Mammary epithelial cell (primary cell): ENCODE measurements at regions of chr11 and their contacts with region 1.

Region 1: GRCh38 chr11:6505577-6506240 is 8.6 kb downstream of the DNHD1 start:
- DNase-seq: peak; percentile 65
- H3K4me3 ChIP-seq: no peak overlapping the region
- H3K27ac ChIP-seq: no peak overlapping the region
- H3K4me1 ChIP-seq: peaks cover 9% of the 10 kb centered on the region
- H3K27me3 ChIP-seq: no peaks in the 10 kb centered on the region
- CTCF ChIP-seq: peak; percentile 74 to 79

Region 2: GRCh38 chr11:5258543-5259262 is 1247.0 kb before region 1 on chr11:
- CTCF ChIA-PET with region 1: no interaction called
- dilution Hi-C with region 1: no loop called
- in situ Hi-C with region 1: no loop called
- intact Hi-C with region 1: no loop called
- DNase-seq: peak; percentile 43
- H3K4me3 ChIP-seq: no peak overlapping the region
- H3K27ac ChIP-seq: no peak overlapping the region
- H3K4me1 ChIP-seq: no peaks in the 10 kb centered on the region
- H3K27me3 ChIP-seq: no peaks in the 10 kb centered on the region
- CTCF ChIP-seq: no peak

Region 3: DNA sequence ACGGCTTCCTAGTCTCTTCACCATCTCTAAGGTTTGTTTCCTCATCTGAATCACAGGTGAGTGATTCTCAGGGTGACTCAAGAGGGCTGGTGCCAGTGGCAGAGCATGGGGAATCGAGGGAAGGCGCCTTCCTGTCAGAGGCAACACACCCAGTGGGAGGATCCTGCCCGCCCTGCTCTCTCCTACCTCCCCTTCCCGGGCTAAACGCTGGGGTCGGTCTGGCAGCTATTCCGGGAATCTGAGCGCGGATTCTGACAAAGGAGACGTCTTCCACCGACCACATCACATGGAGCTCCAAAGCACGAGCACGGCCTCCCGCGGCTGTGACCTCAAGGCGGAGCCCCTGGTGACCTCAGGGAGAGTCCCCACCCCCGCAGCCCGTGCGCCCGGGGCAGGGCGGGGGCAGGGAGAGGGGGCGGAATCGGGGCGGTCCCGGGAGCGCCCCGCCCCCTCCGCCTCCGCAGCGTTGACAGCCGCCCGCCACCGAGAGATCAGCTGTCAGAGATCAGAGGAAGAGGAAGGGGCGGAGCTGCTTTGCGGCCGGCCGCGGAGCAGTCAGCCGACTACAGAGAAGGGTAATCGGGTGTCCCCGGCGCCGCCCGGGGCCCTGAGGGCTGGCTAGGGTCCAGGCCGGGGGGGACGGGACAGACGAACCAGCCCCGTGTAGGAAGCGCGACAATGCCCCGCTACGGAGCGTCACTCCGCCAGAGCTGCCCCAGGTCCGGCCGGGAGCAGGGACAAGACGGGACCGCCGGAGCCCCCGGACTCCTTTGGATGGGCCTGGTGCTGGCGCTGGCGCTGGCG is 115.6 kb before region 1 on chr11 and contains the start of gene SMPD1:
- CTCF ChIA-PET with region 1: no interaction called
- dilution Hi-C with region 1: no loop called
- in situ Hi-C with region 1: loop called in 1 of 2 experiments (anchors 10 kb)
- intact Hi-C with region 1: no loop called
- DNase-seq: peak; percentile 95
- H3K4me3 ChIP-seq: peak within 1 kb of the TSS; percentile 65 to 93 (median 67)
- H3K27ac ChIP-seq: peak within 1 kb of the TSS; percentile 87
- H3K4me1 ChIP-seq: peaks cover 21% of the 10 kb centered on the region
- H3K27me3 ChIP-seq: no peaks in the 10 kb centered on the region
- CTCF ChIP-seq: no peak
- total RNA-seq, gene SMPD1: 17.0 to 24.1 TPM

Region 4: DNA sequence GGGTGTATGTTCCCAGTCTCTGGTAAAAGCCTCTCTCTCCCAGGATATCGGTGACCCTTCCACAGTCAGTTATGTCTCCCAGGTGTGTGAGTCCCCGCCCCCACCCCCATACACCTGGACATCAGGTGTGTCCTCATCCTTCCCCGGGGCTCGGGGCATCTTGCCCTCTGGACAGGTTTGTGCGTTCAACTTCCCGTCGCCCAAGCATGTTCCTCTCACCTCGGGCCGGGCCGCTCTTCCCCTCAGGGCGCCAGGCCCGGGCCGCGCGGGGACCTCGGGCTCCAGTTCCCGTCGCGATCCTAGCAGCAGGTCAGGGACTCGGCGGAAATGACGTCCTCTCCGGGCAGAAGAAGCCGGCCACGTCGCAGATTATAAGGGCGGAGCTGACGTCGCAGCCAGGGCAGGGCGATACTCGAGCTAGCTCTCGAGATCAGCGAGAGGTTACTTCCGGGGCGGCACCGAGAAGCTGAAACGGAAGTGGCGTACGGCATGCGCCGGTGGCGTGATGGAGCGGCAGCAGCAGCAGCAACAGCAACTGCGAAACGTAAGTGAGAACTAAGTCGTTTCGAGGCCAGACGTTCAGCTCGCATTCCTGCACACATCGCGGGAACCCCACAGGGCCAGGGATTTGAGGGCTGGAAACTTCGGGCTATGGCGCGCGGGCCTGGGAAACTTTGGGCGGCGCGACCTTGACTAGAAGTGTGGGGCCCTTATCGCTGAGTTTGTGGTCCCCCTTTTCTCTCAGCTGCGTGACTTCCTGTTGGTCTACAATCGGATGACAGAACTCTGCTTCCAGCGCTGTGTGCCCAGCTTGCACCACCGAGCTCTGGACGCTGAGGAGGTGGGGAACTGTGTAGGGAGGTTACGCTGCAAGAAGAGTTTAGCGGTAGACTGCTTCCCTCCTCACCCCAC is 24.4 kb before region 1 on chr11 and contains the starts of genes ARFIP2 and TIMM10B:
- CTCF ChIA-PET with region 1: no interaction called
- dilution Hi-C with region 1: no loop called
- in situ Hi-C with region 1: no loop called
- intact Hi-C with region 1: loop called (anchors 2 kb)
- DNase-seq: peak; percentile 97
- H3K4me3 ChIP-seq: peak within 1 kb of the TSS; percentile 66 to 74 (median 67)
- H3K27ac ChIP-seq: peak within 1 kb of the TSS; percentile 91
- H3K4me1 ChIP-seq: peaks cover 21% of the 10 kb centered on the region
- H3K27me3 ChIP-seq: no peaks in the 10 kb centered on the region
- CTCF ChIP-seq: no peak
- total RNA-seq, gene ARFIP2: 70.5 to 76.2 TPM
- total RNA-seq, gene TIMM10B: 36.0 to 42.7 TPM